Activated CD8-positive, alpha-beta T cell treated with anti-CD3 and anti-CD28 coated beads for 36 hours (primary cell): ENCODE measurements at regions of chr2 and their contacts with region 1.

Region 1: GRCh38 chr2:104849618-104850141 is 4.2 kb upstream of the POU3F3 start:
- DNase-seq: peak; percentile 73
- ATAC-seq: peak; percentile 32
- H3K4me3 Mint-ChIP-seq: no peak overlapping the region
- H3K27ac Mint-ChIP-seq: no peak overlapping the region
- H3K4me1 Mint-ChIP-seq: peaks cover 29% of the 10 kb centered on the region
- H3K27me3 Mint-ChIP-seq: peaks cover 90% of the 10 kb centered on the region
- CTCF ChIP-seq: peak; percentile 80

Region 2: DNA sequence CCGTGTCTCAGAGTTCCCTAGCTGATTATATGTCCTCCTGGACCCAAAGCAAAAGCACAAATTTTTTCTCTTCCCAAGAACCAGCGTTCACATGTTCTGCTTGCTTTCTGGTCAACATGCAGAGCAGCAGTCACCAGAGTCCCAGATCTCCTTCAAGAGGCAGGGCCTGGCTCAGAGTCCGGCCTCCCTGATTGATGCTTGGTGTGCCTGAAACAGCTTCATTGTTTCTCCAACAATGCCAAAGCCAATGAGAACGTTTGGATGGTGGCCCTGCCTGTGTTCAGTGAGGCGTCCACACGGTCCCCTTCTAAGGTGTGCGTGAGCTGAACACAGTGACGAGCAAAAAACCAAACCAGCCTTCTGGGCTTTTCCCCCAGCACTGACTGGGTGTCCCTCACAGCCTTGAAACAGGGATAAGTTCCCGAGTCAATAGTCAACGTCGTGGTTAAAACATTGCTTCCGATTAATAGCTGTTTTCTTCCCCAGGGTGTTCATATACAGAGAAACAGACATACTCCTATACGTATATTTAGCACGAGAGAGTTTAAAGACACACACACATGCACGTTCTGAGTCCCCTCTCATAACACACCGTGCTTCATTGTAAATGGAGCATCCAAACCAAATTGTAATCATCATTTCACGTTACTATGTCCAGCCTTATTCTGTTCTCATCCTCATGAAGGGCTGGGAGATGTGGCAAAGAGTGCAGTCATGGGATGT is 15.1 kb before region 1 on chr2:
- CTCF ChIA-PET with region 1: interaction called, 18 read pairs
- POLR2A ChIA-PET with region 1: no interaction called
- intact Hi-C with region 1: no loop called
- DNase-seq: no peak
- ATAC-seq: no peak
- H3K4me3 Mint-ChIP-seq: no peak overlapping the region
- H3K27ac Mint-ChIP-seq: no peak overlapping the region
- H3K4me1 Mint-ChIP-seq: no peaks in the 10 kb centered on the region
- H3K27me3 Mint-ChIP-seq: peaks cover 8% of the 10 kb centered on the region
- CTCF ChIP-seq: no peak

Region 3: DNA sequence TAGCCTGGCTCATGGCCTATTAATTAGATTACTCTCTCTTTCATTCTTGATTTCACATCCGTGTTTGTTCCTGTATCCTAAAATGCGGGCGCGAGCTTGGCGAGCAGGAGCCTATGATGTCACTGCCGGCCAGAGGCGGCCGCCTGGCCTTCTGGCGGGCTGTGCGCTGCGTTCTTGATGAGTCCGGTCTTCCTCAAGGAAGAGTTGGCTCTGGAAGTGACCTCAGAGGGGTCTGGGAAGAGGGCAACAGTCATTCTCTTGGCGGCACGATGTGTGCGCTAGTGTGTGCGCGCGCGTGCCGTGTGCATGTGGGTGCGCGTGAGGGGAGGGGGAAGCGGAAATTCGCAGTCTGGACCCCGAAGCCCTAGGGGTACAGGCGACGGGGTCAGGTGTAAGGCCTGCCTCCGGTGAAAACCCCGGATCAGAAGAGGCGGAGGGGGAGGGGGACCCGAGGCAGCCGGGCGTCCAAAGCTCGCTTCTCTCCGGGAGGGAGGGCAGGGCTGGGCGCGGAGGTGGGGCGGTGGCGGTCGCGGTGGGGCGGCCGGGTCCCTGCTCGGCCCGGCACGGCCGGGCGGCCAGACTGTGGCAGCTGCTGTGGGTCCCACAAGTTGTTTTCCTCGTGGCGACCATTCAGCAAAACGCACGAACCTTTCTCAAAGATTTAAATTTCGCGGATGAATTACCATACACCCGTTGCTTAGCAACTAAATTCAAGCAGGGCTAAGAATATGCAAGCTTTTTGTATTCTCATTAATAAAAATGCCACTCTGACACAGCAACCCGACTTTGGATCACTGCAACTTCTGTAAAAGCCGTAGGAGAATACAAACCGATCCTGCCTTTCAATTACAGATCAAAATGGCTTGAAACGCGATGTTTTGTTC is 12.6 kb after region 1 on chr2:
- CTCF ChIA-PET with region 1: interaction called, 30 read pairs
- POLR2A ChIA-PET with region 1: no interaction called
- intact Hi-C with region 1: no loop called
- DNase-seq: no peak
- ATAC-seq: no peak
- H3K4me3 Mint-ChIP-seq: peak overlapping the region; percentile 4
- H3K27ac Mint-ChIP-seq: no peak overlapping the region
- H3K4me1 Mint-ChIP-seq: peaks cover 6% of the 10 kb centered on the region
- H3K27me3 Mint-ChIP-seq: peaks cover 77% of the 10 kb centered on the region
- CTCF ChIP-seq: no peak